ENCODE measurements at regions of chr13 and their contacts with region 1.

Region 1: GRCh38 chr13:41061075-41061913 is at the start of gene WBP4:
- DNase-seq: peak; percentile 72 to 93 (median 82)
- ATAC-seq: peak; percentile 52
- H3K4me3 ChIP-seq: peak within 1 kb of the TSS; percentile 74
- H3K4me3 Mint-ChIP-seq: peak within 1 kb of the TSS; percentile 95
- H3K27ac ChIP-seq: peak within 1 kb of the TSS; percentile 82 to 86
- H3K27ac Mint-ChIP-seq: peak within 1 kb of the TSS; percentile 98
- H3K4me1 ChIP-seq: peaks cover 13% of the 10 kb centered on the region
- H3K4me1 Mint-ChIP-seq: peaks cover 61% of the 10 kb centered on the region
- H3K27me3 ChIP-seq: no peaks in the 10 kb centered on the region
- H3K27me3 Mint-ChIP-seq: peaks cover 14% of the 10 kb centered on the region
- CTCF ChIP-seq: no peak
- total RNA-seq, gene WBP4: 6.9 to 7.4 TPM

Region 2: GRCh38 chr13:40770934-40771618 is 290.2 kb before region 1 on chr13 and contains the start of gene MRPS31:
- CTCF ChIA-PET with region 1: no interaction called
- POLR2A ChIA-PET with region 1: no interaction called
- intact Hi-C with region 1: loop called in 1 of 2 experiments (anchors 5 kb)
- DNase-seq: peak; percentile 87 to 96 (median 94)
- ATAC-seq: peak; percentile 92
- H3K4me3 ChIP-seq: peak within 1 kb of the TSS; percentile 90
- H3K4me3 Mint-ChIP-seq: peak within 1 kb of the TSS; percentile 98
- H3K27ac ChIP-seq: peak within 1 kb of the TSS; percentile 75 to 81
- H3K27ac Mint-ChIP-seq: peak within 1 kb of the TSS; percentile 95
- H3K4me1 ChIP-seq: peaks cover 26% of the 10 kb centered on the region
- H3K4me1 Mint-ChIP-seq: peaks cover 29% of the 10 kb centered on the region
- H3K27me3 ChIP-seq: no peaks in the 10 kb centered on the region
- H3K27me3 Mint-ChIP-seq: no peaks in the 10 kb centered on the region
- CTCF ChIP-seq: peak; percentile 16
- total RNA-seq, gene MRPS31: 8.3 to 9.5 TPM

Region 3: DNA sequence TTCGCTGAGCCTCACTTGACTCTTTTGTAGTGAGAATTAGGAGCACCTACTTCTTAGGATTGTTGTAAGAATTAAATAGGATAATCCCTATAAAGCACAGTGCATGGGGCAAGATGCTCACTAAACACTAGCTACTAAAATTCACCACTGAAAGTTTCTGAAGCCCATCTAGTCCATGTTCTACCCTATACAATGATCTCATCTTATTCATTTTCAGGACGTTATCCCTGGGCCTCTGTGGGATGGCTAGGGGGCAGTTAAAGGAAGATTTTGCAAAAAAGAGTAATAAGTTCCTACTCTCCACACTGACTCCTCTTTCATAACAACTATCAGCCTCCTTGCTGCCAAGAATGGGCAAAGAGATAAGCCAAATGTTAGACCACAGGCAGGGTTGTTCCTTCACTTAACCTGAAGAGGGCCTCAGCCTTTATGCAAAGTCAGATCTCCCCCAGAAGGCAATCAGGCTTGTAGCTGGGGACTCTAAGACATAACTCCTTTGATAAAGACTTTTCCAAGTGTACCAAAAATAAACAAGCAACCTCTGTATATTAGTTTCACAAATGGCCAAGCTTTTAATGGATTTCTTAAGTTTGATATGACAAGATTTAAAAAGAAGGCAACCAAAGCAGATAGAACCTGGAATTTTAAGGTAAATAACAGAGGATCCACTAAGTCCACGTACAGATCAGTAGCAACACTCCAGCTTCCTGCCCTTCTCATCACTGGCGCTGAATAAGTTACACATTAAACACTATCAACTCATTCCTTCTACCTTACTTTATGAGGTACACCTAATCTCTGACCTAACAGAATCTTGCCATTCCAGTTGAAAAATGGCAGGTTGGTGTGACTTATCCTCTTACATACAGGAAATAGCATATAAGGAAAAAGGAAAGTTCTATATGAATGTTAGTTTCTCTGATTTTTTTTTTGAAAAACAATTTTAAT is 86.6 kb before region 1 on chr13:
- CTCF ChIA-PET with region 1: interaction called, 13 read pairs
- POLR2A ChIA-PET with region 1: interaction called, 18 read pairs
- intact Hi-C with region 1: no loop called
- DNase-seq: peak in 8 of 14 experiments; percentile 17 to 81 (median 32)
- ATAC-seq: peak; percentile 85
- H3K4me3 ChIP-seq: no peak overlapping the region
- H3K4me3 Mint-ChIP-seq: peak overlapping the region; percentile 77
- H3K27ac ChIP-seq: peak overlapping the region in 1 of 2 donors; percentile 46
- H3K27ac Mint-ChIP-seq: peak overlapping the region; percentile 92
- H3K4me1 ChIP-seq: peaks cover 37% of the 10 kb centered on the region
- H3K4me1 Mint-ChIP-seq: peaks cover 94% of the 10 kb centered on the region
- H3K27me3 ChIP-seq: no peaks in the 10 kb centered on the region
- H3K27me3 Mint-ChIP-seq: no peaks in the 10 kb centered on the region
- CTCF ChIP-seq: peak; percentile 70

Region 4: DNA sequence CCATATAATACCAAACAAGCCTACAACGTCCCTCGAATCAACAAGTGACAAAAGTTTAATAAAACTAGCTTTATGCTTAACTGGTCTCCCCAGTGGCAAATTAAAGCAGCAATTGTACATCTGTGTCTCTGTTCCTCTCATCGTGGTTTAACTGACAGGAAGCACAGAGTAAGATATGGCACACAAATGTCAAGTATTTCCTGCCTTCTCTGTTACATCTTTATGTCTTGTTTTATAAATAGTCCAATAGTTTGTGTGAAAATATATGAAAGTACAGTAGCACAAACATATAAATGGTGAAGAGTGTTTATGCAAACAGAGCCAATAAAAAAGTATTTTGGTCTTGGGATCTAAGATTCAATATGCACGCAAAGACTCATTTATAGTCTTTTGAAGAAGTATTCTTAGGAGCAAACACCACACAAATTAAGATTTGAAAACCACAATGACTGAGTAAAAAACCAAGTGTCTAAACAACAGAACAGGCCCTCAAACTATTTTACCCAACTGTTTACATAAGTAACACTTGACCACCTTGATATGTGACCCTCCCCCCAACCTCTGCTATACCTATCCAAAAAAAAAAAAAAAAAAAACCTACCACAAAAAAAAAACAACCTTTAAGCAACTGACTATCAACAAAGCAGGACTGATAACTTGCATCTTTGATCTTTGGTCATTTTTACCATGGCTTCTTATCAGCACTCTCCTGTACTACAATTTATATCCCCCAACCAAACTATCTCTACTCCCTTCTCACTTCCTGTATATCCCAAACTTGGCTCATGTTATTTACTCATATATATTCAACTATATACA is 56.2 kb before region 1 on chr13:
- CTCF ChIA-PET with region 1: interaction called, 9 read pairs
- POLR2A ChIA-PET with region 1: interaction called, 12 read pairs
- intact Hi-C with region 1: no loop called
- DNase-seq: peak in 4 of 14 experiments; percentile 19 to 82 (median 76)
- ATAC-seq: peak; percentile 85
- H3K4me3 ChIP-seq: peak overlapping the region; percentile 21
- H3K4me3 Mint-ChIP-seq: peak overlapping the region; percentile 80
- H3K27ac ChIP-seq: peak overlapping the region; percentile 51 to 69
- H3K27ac Mint-ChIP-seq: peak overlapping the region; percentile 91
- H3K4me1 ChIP-seq: peaks cover 44% of the 10 kb centered on the region
- H3K4me1 Mint-ChIP-seq: peaks cover 77% of the 10 kb centered on the region
- H3K27me3 ChIP-seq: no peaks in the 10 kb centered on the region
- H3K27me3 Mint-ChIP-seq: no peaks in the 10 kb centered on the region
- CTCF ChIP-seq: no peak

Region 5: DNA sequence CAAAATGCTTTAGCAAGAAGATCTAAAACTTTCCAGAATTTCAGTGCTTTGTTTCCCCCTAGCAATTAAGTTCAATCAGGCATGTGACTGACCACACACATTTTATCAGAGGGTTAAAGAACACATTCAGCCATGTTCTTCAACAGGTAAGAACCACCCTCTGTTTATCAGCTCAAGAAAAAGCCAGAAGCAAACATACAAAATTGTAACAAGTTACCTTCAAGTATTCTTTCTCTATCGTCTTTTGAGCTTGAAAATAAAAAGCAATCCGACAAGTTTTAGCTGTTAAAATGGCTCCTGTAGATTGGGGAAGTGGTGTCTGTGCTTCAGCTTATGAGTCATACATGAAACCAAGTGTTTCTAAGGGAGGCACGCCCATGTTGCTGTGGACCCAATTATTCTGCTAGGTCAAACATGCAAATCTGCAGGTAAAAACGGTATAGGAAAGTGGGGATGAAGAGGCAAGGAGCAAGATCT is 42.2 kb before region 1 on chr13 and contains the start of gene ELF1:
- CTCF ChIA-PET with region 1: interaction called, 11 read pairs
- POLR2A ChIA-PET with region 1: interaction called, 103 read pairs
- intact Hi-C with region 1: loop called in 1 of 2 experiments (anchors 2 kb)
- DNase-seq: peak in 13 of 14 experiments; percentile 39 to 89 (median 53)
- ATAC-seq: peak; percentile 89
- H3K4me3 ChIP-seq: peak within 1 kb of the TSS; percentile 68
- H3K4me3 Mint-ChIP-seq: peak within 1 kb of the TSS; percentile 94
- H3K27ac ChIP-seq: peak within 1 kb of the TSS; percentile 77 to 85
- H3K27ac Mint-ChIP-seq: peak within 1 kb of the TSS; percentile 94
- H3K4me1 ChIP-seq: no peaks in the 10 kb centered on the region
- H3K4me1 Mint-ChIP-seq: peaks cover 49% of the 10 kb centered on the region
- H3K27me3 ChIP-seq: no peaks in the 10 kb centered on the region
- H3K27me3 Mint-ChIP-seq: no peaks in the 10 kb centered on the region
- CTCF ChIP-seq: no peak
- total RNA-seq, gene ELF1: 354 to 358 TPM

Region 6: GRCh38 chr13:41034881-41035280 is 26.4 kb before region 1 on chr13:
- CTCF ChIA-PET with region 1: no interaction called
- POLR2A ChIA-PET with region 1: no interaction called
- intact Hi-C with region 1: no loop called
- DNase-seq: no peak
- ATAC-seq: no peak
- H3K4me3 ChIP-seq: no peak overlapping the region
- H3K4me3 Mint-ChIP-seq: no peak overlapping the region
- H3K27ac ChIP-seq: no peak overlapping the region
- H3K27ac Mint-ChIP-seq: no peak overlapping the region
- H3K4me1 ChIP-seq: no peaks in the 10 kb centered on the region
- H3K4me1 Mint-ChIP-seq: peaks cover 19% of the 10 kb centered on the region
- H3K27me3 ChIP-seq: no peaks in the 10 kb centered on the region
- H3K27me3 Mint-ChIP-seq: no peaks in the 10 kb centered on the region
- CTCF ChIP-seq: no peak

Region 7: GRCh38 chr13:41179593-41180250 is 118.4 kb after region 1 on chr13:
- CTCF ChIA-PET with region 1: no interaction called
- POLR2A ChIA-PET with region 1: no interaction called
- intact Hi-C with region 1: no loop called
- DNase-seq: no peak
- ATAC-seq: no peak
- H3K4me3 ChIP-seq: no peak overlapping the region
- H3K4me3 Mint-ChIP-seq: no peak overlapping the region
- H3K27ac ChIP-seq: no peak overlapping the region
- H3K27ac Mint-ChIP-seq: no peak overlapping the region
- H3K4me1 ChIP-seq: no peaks in the 10 kb centered on the region
- H3K4me1 Mint-ChIP-seq: no peaks in the 10 kb centered on the region
- H3K27me3 ChIP-seq: no peaks in the 10 kb centered on the region
- H3K27me3 Mint-ChIP-seq: no peaks in the 10 kb centered on the region
- CTCF ChIP-seq: no peak

Region 8: DNA sequence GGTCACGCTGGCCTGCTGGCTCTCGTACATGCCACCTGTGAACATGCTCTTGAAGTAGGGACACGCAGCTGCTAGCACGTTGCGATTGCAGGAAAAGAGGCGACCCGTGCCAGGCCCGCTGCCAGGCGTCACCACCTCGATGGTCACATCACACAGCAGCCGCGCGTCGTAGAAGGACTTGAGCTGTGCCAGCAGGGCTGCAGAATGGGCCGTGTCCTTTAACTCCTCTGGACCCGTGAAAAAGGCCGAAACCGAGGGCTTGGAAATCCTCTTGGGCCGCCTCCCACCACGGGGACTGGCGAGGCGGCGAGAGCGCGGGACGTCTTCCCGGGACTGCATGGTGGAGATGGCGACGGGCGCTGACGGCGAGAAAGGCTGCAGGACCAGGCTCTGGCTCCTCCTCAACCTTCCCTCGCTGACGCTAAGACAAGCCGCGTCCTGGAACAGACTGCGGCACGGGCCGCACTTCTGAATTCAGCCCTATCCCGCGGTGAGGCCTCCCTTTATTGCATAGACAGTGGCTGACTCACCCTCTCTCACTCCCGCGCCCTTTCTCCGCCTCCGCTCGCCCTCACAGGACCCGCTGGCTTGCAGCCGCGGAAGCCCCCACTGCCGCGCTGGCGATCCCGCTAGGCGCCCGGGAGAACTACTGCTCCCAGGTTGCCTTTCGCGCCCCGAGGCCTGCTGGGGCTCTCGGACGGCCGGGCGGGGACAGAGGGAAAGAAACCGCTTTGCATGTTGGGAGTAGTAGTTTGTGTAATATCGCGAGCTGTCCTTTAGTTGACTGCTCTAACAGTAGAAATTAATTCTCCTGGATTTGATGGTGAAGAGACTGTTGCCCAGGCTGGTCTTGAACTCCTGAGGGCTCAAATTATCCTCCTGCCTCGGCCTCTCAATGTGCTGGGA is 132.9 kb after region 1 on chr13 and contains the start of gene KBTBD7:
- CTCF ChIA-PET with region 1: no interaction called
- POLR2A ChIA-PET with region 1: interaction called, 5 read pairs
- intact Hi-C with region 1: loop called in 1 of 2 experiments (anchors 5 kb)
- DNase-seq: peak; percentile 79 to 93 (median 87)
- ATAC-seq: peak; percentile 96
- H3K4me3 ChIP-seq: peak within 1 kb of the TSS; percentile 74
- H3K4me3 Mint-ChIP-seq: peak within 1 kb of the TSS; percentile 94
- H3K27ac ChIP-seq: peak within 1 kb of the TSS; percentile 8 to 66
- H3K27ac Mint-ChIP-seq: peak within 1 kb of the TSS; percentile 87
- H3K4me1 ChIP-seq: peaks cover 17% of the 10 kb centered on the region
- H3K4me1 Mint-ChIP-seq: peaks cover 44% of the 10 kb centered on the region
- H3K27me3 ChIP-seq: no peaks in the 10 kb centered on the region
- H3K27me3 Mint-ChIP-seq: no peaks in the 10 kb centered on the region
- CTCF ChIP-seq: no peak
- total RNA-seq, gene KBTBD7: 2.7 to 3.1 TPM

Region 9: DNA sequence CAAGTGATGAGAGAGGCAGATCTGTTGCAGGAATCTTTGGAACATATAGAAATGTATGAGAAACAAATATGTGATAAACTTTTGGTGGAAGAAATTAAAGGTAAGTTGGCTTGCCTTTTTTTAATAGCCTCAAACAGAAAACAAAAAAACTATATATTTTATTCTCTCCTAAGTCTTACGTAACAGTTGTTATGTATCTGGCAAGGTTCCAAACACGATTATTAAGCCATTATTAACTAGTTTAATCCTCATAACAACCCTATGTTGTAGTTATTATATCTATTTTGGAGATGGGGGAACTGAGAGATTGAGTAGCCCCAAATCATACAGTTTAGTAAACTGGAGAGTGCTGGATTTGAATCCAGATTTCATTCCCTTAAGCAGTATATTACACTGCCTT is 264.5 kb after region 1 on chr13:
- CTCF ChIA-PET with region 1: no interaction called
- POLR2A ChIA-PET with region 1: no interaction called
- intact Hi-C with region 1: no loop called
- DNase-seq: no peak
- ATAC-seq: no peak
- H3K4me3 ChIP-seq: no peak overlapping the region
- H3K4me3 Mint-ChIP-seq: no peak overlapping the region
- H3K27ac ChIP-seq: no peak overlapping the region
- H3K27ac Mint-ChIP-seq: no peak overlapping the region
- H3K4me1 ChIP-seq: peaks cover 8% of the 10 kb centered on the region
- H3K4me1 Mint-ChIP-seq: peaks cover 54% of the 10 kb centered on the region
- H3K27me3 ChIP-seq: no peaks in the 10 kb centered on the region
- H3K27me3 Mint-ChIP-seq: no peaks in the 10 kb centered on the region
- CTCF ChIP-seq: no peak

Region 10: GRCh38 chr13:42039946-42040729 is 978.8 kb after region 1 on chr13:
- CTCF ChIA-PET with region 1: no interaction called
- POLR2A ChIA-PET with region 1: no interaction called
- intact Hi-C with region 1: loop called in 1 of 2 experiments (anchors 5 kb)
- DNase-seq: peak; percentile 75 to 96 (median 88)
- ATAC-seq: peak; percentile 82
- H3K4me3 ChIP-seq: peak overlapping the region; percentile 83
- H3K4me3 Mint-ChIP-seq: peak overlapping the region; percentile 87
- H3K27ac ChIP-seq: peak overlapping the region; percentile 53 to 68
- H3K27ac Mint-ChIP-seq: peak overlapping the region; percentile 85
- H3K4me1 ChIP-seq: peaks cover 20% of the 10 kb centered on the region
- H3K4me1 Mint-ChIP-seq: peaks cover 19% of the 10 kb centered on the region
- H3K27me3 ChIP-seq: no peaks in the 10 kb centered on the region
- H3K27me3 Mint-ChIP-seq: no peaks in the 10 kb centered on the region
- CTCF ChIP-seq: no peak